ENCODE measurements at regions of chr16 and their contacts with region 1.

Region 1: DNA sequence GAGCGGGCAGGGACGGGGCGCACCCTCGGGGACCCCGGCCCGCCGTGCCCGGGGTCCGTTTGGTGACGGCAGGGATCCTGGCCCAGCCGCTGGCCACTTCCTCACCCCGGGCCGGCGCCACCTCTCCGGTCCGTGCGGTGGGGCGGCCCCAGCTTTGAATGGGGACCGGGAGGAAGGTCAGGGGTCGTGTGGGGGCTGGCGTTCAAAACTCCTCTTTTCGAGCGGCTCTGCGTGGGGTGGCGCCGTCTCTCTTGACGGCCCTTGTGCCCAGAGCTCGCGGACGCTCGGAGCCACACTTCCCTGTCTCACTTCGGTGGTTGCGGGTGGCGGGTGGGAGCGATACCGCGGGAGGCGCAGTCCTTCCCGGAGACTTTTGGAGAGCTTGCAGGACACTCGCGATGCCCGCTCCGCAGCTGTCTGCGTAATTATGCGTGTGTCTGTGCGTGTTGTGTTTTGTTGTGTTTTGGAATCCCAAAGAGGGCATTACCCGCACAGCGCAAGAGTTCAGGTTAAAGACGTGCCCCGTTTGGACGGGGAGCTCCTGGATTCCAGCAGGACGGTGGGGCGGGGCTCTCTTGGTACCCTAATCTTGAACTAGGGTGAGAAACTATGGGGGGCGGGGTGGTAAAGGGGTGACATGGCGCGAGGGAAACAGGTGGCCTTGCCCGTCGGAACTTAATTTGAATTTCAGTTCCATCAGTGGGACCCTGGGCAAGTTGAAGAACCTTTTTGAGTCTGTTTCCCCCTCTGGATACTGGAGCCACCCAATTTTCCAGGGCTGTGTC is 637 bp downstream of the PLCG2 start:
- DNase-seq: peak; percentile 33 to 76 (median 69)
- ATAC-seq: peak; percentile 53 to 56
- H3K4me3 ChIP-seq: peak overlapping the region; percentile 80
- H3K27ac ChIP-seq: no peak overlapping the region
- H3K4me1 ChIP-seq: peaks cover 4% of the 10 kb centered on the region
- H3K27me3 ChIP-seq: no peaks in the 10 kb centered on the region

Region 2: DNA sequence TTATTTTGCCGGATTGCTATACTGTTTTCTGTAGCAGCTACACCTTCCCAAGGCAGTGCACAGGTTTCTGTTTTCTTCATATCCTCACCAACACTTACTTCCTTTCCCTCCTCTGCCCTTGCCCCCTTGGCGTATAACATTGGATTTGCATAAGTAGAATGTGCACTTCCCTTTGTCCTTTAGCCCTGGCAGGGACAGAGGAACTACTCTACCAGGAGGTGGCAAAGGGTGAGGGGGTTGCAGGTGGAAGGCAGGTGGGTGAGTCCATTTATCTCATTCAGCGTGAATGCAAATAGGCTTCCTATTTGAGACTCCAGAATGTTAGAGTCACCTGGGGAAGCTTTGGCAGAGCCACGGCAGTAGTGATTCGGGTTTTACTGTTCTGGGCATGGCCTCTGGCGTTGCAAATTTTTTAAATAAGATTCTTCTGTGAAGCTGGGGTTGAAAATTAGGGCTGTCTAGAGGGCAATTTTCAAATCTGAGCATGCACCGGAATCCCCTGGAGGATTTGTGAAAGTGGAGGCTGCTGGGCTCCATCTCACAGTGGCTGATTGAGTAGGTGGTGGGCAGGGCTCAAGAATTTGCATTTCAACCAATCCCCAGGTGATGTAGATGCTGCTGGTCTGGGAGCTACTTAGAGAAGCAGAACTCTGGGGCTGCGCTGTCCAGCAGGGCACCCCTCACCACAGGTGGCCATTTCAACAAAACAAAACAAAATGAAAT is 84.1 kb after region 1 on chr16:
- intact Hi-C with region 1: loop called in 1 of 4 experiments (anchors 10 kb)
- DNase-seq: peak in 1 of 3 donors; percentile 14
- ATAC-seq: no peak
- H3K4me3 ChIP-seq: no peak overlapping the region
- H3K27ac ChIP-seq: no peak overlapping the region
- H3K4me1 ChIP-seq: no peaks in the 10 kb centered on the region
- H3K27me3 ChIP-seq: no peaks in the 10 kb centered on the region

Measured in right cardiac atrium (tissue), 5 donors.